CD4-positive, alpha-beta memory T cell (primary cell): ENCODE measurements at regions of chr3 and their contacts with region 1.

Region 1: DNA sequence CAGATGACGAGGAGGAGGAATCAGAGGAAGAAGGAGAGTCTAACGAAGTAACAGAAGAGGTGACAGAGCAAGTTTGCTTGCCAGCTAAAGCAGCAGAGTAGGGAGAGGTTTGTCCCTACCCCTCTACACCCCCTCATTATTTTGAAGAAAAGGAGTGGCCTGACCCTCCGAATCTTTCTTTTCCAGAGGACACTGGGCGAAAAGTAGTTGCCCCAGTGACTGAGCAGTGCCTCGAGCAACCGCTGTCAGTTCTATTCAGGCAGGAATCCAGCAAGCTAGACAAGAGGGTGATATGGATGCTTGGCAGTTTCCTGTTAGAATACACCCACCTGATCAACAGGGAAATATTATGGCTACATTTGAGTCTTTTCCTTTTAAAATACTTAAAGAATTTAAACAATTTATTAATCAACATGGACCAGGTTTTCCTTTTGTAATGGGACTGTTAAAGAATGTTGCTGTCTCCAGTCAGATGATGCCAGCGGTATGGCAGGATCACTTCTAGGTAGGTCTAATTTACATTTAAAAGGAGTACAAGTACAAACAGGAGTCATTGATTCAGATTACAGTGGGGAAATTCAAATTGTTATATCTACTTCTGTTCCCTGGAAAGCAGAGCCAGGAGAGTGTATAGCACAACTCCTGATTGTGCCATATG is 31.9 kb upstream of the ACVR2B start:
- DNase-seq: no peak
- H3K4me3 ChIP-seq: no peak overlapping the region
- H3K4me3 Mint-ChIP-seq: peak overlapping the region in 3 of 8 donors; percentile 35 to 78 (median 54)
- H3K27ac ChIP-seq: no peak overlapping the region
- H3K27ac Mint-ChIP-seq: peak overlapping the region in 1 of 7 donors; percentile 89
- H3K4me1 ChIP-seq: peaks cover 40% of the 10 kb centered on the region
- H3K4me1 Mint-ChIP-seq: peaks cover 26 to 44% (median 32%) of the 10 kb centered on the region in 4 donors
- H3K27me3 ChIP-seq: no peaks in the 10 kb centered on the region
- H3K27me3 Mint-ChIP-seq: no peaks in the 10 kb centered on the region

Region 2: DNA sequence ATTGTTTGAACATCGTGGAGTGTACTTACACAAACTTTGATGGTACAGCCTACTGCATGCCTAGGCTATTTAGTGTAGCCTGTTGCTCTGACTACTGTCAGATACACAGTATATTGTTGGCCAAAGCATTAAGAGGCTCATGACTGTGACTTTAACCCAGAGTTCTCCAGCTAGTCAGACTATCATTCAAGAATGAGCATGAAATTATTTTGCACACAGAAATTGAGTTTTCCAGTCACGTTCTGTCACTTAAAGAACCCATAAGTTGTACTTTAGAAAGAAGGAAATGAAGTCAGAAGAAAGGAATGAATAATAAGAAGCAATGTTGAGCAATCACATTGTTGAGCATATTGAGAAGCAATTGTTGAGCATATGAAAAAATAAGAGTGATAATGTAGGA is 193.8 kb before region 1 on chr3:
- CTCF ChIA-PET with region 1: no interaction called
- POLR2A ChIA-PET with region 1: no interaction called
- intact Hi-C with region 1: no loop called
- DNase-seq: no peak
- H3K4me3 ChIP-seq: no peak overlapping the region
- H3K4me3 Mint-ChIP-seq: no peak overlapping the region
- H3K27ac ChIP-seq: no peak overlapping the region
- H3K27ac Mint-ChIP-seq: no peak overlapping the region
- H3K4me1 ChIP-seq: no peaks in the 10 kb centered on the region
- H3K4me1 Mint-ChIP-seq: no peaks in the 10 kb centered on the region
- H3K27me3 ChIP-seq: no peaks in the 10 kb centered on the region
- H3K27me3 Mint-ChIP-seq: no peaks in the 10 kb centered on the region

Region 3: GRCh38 chr3:38334142-38335055 is 87.4 kb before region 1 on chr3:
- CTCF ChIA-PET with region 1: no interaction called
- POLR2A ChIA-PET with region 1: no interaction called
- intact Hi-C with region 1: no loop called
- DNase-seq: no peak
- H3K4me3 ChIP-seq: no peak overlapping the region
- H3K4me3 Mint-ChIP-seq: no peak overlapping the region
- H3K27ac ChIP-seq: no peak overlapping the region
- H3K27ac Mint-ChIP-seq: no peak overlapping the region
- H3K4me1 ChIP-seq: no peaks in the 10 kb centered on the region
- H3K4me1 Mint-ChIP-seq: no peaks in the 10 kb centered on the region
- H3K27me3 ChIP-seq: no peaks in the 10 kb centered on the region
- H3K27me3 Mint-ChIP-seq: peaks cover 3 to 7% of the 10 kb centered on the region in 2 donors

Region 4: GRCh38 chr3:38374221-38374620 is 47.6 kb before region 1 on chr3:
- CTCF ChIA-PET with region 1: no interaction called
- POLR2A ChIA-PET with region 1: interaction called, 3 read pairs
- intact Hi-C with region 1: loop called (anchors 10 kb)
- DNase-seq: peak in 4 of 5 donors; percentile 17 to 31 (median 24)
- H3K4me3 ChIP-seq: no peak overlapping the region
- H3K4me3 Mint-ChIP-seq: peak overlapping the region; percentile 52 to 86 (median 72)
- H3K27ac ChIP-seq: no peak overlapping the region
- H3K27ac Mint-ChIP-seq: peak overlapping the region; percentile 66 to 92 (median 84)
- H3K4me1 ChIP-seq: peaks cover 37% of the 10 kb centered on the region
- H3K4me1 Mint-ChIP-seq: peaks cover 22 to 41% (median 31%) of the 10 kb centered on the region in 4 donors
- H3K27me3 ChIP-seq: no peaks in the 10 kb centered on the region
- H3K27me3 Mint-ChIP-seq: no peaks in the 10 kb centered on the region

Region 5: GRCh38 chr3:38453075-38453912 is 31.5 kb after region 1 on chr3 and contains the start of gene ACVR2B:
- CTCF ChIA-PET with region 1: interaction called, 3 read pairs
- POLR2A ChIA-PET with region 1: interaction called, 13 read pairs
- intact Hi-C with region 1: no loop called
- DNase-seq: peak; percentile 56 to 62 (median 57)
- H3K4me3 ChIP-seq: peak within 1 kb of the TSS; percentile 72 to 78
- H3K4me3 Mint-ChIP-seq: peak within 1 kb of the TSS; percentile 96 to 100 (median 97)
- H3K27ac ChIP-seq: peak within 1 kb of the TSS; percentile 31
- H3K27ac Mint-ChIP-seq: peak within 1 kb of the TSS; percentile 41 to 95 (median 92)
- H3K4me1 ChIP-seq: peaks cover 17% of the 10 kb centered on the region
- H3K4me1 Mint-ChIP-seq: peaks cover 10 to 39% (median 19%) of the 10 kb centered on the region in 4 donors
- H3K27me3 ChIP-seq: no peaks in the 10 kb centered on the region
- H3K27me3 Mint-ChIP-seq: no peaks in the 10 kb centered on the region
- total RNA-seq, gene ACVR2B: 12.3 to 13.2 TPM